Left colon (tissue), 2 donors: ENCODE measurements at regions of chr12 and their contacts with region 1.

Region 1: GRCh38 chr12:15151161-15152120 is 69.8 kb downstream of the RERG start:
- DNase-seq: no peak
- ATAC-seq: peak; percentile 34

Region 2: GRCh38 chr12:14443531-14443930 is 707.9 kb before region 1 on chr12:
- intact Hi-C with region 1: no loop called
- DNase-seq: no peak
- ATAC-seq: no peak

Region 3: GRCh38 chr12:15001733-15002382 is 149.6 kb before region 1 on chr12:
- intact Hi-C with region 1: loop called in 1 of 2 experiments (anchors 10 kb)
- DNase-seq: peak in 1 of 2 donors; percentile 64
- ATAC-seq: no peak

Region 4: GRCh38 chr12:15220994-15221885 is 69.8 kb after region 1 on chr12 and contains the start of gene RERG:
- intact Hi-C with region 1: loop called in 1 of 2 experiments (anchors 5 kb)
- DNase-seq: peak; percentile 56 to 81
- ATAC-seq: peak; percentile 100
- total RNA-seq, gene RERG: 0.85 to 4.1 TPM